ENCODE measurements at regions of chr10 and their contacts with region 1.

Region 1: GRCh38 chr10:20674926-20675325 is 222.2 kb downstream of the NEBL start:
- DNase-seq: no peak
- ATAC-seq: no peak
- H3K4me3 ChIP-seq: no peak overlapping the region
- H3K27ac ChIP-seq: no peak overlapping the region
- H3K4me1 ChIP-seq: no peaks in the 10 kb centered on the region
- H3K27me3 ChIP-seq: 0 out of 5 replicates have a peak, but pooled peaks cover 0 to 10% of the 10 kb centered on the region in 2 experiments
- CTCF ChIP-seq: no peak
- EP300 ChIP-seq: no peak
- POLR2A ChIP-seq: no peak
- RAD21 ChIP-seq: no peak

Region 2: GRCh38 chr10:19007031-19007430 is 1667.9 kb before region 1 on chr10:
- CTCF ChIA-PET with region 1: no interaction called
- POLR2A ChIA-PET with region 1: no interaction called
- in situ Hi-C with region 1: no loop called
- intact Hi-C with region 1: loop called (anchors 5 kb)
- DNase-seq: no peak
- ATAC-seq: no peak
- H3K4me3 ChIP-seq: no peak overlapping the region
- H3K27ac ChIP-seq: no peak overlapping the region
- H3K4me1 ChIP-seq: no peaks in the 10 kb centered on the region
- H3K27me3 ChIP-seq: no peaks in the 10 kb centered on the region
- CTCF ChIP-seq: no peak
- EP300 ChIP-seq: no peak
- POLR2A ChIP-seq: no peak
- RAD21 ChIP-seq: no peak

Region 3: DNA sequence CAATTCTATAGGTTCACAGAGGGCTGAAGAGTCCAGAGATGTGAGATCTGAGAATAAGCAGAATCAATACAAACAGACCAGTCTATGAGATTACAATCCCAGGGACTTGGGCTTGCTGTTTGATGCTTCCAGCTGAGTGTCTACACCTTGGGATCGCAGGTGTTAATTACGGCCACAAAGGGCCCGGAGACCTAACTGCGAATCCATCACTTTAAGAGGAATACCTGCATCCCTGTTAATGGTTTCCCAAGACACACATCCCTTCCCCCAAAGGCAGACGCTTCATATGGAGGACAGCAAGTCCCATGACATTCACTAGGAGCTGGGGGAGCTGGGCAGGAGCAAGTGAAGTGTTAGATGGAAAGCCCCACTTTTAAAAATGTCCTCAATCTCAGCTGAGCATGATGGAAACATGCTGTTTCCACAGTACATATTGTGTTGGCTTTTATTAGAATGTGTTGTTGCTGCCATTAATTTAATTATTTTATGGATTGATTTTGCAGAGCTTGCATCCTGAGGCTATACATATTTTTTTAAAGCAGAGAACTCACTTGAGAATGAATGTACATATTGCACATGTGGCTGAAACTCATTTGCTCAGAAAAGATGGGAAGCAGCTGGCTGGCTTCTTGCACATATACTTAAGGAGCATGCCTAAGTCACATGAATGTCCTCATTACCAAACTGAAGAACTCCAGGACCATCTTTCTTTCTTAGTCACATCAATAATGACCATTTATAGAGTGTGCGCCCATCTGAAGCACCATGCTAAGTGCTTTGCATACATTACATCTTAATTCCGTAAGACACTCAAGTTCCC is 70.8 kb after region 1 on chr10:
- CTCF ChIA-PET with region 1: no interaction called
- POLR2A ChIA-PET with region 1: no interaction called
- in situ Hi-C with region 1: no loop called
- intact Hi-C with region 1: no loop called
- DNase-seq: no peak
- ATAC-seq: no peak
- H3K4me3 ChIP-seq: no peak overlapping the region
- H3K27ac ChIP-seq: no peak overlapping the region
- H3K4me1 ChIP-seq: no peaks in the 10 kb centered on the region
- H3K27me3 ChIP-seq: peaks cover 0 to 3% of the 10 kb centered on the region in 2 experiments; a peak in 1 of 5 replicates
- CTCF ChIP-seq: no peak
- EP300 ChIP-seq: no peak
- POLR2A ChIP-seq: no peak
- RAD21 ChIP-seq: no peak

Measured in HepG2 (cell line).